ENCODE measurements at regions of chr5 and their contacts with region 1.

Region 1: DNA sequence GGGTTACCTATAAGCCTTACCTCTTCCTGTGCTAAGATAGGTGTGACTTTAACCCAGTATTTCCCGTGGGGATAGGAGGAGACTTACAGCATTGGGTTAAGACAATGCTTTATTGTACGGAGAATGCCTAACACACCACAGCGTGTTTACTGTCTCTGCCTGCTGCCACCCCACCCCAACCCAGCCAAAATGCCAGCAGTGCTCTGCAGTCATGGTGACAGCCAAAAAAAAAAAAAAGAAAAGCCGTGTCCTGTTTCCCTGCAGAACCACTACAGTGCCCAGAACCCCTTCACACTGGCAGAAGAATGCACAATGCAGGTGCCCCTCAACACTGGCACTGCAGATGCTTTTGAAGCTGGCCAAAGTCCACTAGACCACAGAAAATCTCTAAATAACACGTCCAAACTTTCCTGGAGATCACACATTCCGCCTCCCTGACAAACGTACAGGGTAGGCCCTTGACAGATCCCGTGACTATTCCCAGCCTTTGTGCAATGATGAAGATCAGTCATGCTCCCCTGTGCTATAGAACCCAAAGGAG is 102.2 kb downstream of the SERINC5 start:
- DNase-seq: peak in 11 of 14 experiments; percentile 19 to 67 (median 48)
- ATAC-seq: peak; percentile 69
- H3K4me3 ChIP-seq: no peak overlapping the region
- H3K4me3 Mint-ChIP-seq: peak overlapping the region; percentile 73
- H3K27ac ChIP-seq: peak overlapping the region; percentile 48 to 56
- H3K27ac Mint-ChIP-seq: peak overlapping the region; percentile 98
- H3K4me1 ChIP-seq: peaks cover 51% of the 10 kb centered on the region
- H3K4me1 Mint-ChIP-seq: peaks cover 86% of the 10 kb centered on the region
- H3K27me3 ChIP-seq: no peaks in the 10 kb centered on the region
- H3K27me3 Mint-ChIP-seq: no peaks in the 10 kb centered on the region
- CTCF ChIP-seq: no peak

Region 2: DNA sequence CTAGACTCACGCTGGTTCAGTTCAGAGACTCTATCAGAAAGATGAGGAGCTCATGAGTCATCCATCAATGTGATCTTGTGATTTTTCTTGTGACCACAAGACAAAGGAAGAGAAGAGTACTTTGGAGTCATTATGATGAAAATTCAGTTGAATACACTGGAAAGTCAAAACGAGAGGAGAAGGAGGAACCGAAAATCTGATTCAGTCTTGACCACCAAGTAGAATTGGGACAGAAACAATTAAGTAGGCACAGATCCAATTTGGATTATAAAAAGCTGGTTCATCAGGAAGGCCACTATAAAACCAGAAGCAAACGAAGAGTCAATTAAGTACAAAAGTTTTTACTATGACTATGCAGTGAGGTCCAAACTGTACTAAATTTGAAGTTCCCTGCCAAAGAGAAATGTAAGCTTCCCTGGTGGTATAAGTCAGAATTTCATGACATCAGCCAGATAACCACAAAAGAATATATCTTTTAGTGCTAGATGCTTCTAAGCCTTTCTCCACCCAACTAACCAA is 27.6 kb before region 1 on chr5:
- CTCF ChIA-PET with region 1: no interaction called
- POLR2A ChIA-PET with region 1: interaction called, 10 read pairs
- intact Hi-C with region 1: no loop called
- DNase-seq: peak in 4 of 14 experiments; percentile 50 to 75 (median 62)
- ATAC-seq: peak; percentile 83
- H3K4me3 ChIP-seq: no peak overlapping the region
- H3K4me3 Mint-ChIP-seq: peak overlapping the region; percentile 1
- H3K27ac ChIP-seq: peak overlapping the region in 1 of 2 donors; percentile 35
- H3K27ac Mint-ChIP-seq: peak overlapping the region; percentile 60
- H3K4me1 ChIP-seq: peaks cover 38% of the 10 kb centered on the region
- H3K4me1 Mint-ChIP-seq: peaks cover 57% of the 10 kb centered on the region
- H3K27me3 ChIP-seq: no peaks in the 10 kb centered on the region
- H3K27me3 Mint-ChIP-seq: no peaks in the 10 kb centered on the region
- CTCF ChIP-seq: no peak

Region 3: GRCh38 chr5:80204808-80205614 is 51.4 kb after region 1 on chr5:
- CTCF ChIA-PET with region 1: no interaction called
- POLR2A ChIA-PET with region 1: interaction called, 6 read pairs
- intact Hi-C with region 1: loop called in 1 of 2 experiments (anchors 5 kb)
- DNase-seq: peak in 2 of 14 experiments; percentile 51 to 63
- ATAC-seq: peak; percentile 87
- H3K4me3 ChIP-seq: no peak overlapping the region
- H3K4me3 Mint-ChIP-seq: peak overlapping the region; percentile 65
- H3K27ac ChIP-seq: peak overlapping the region; percentile 47 to 61
- H3K27ac Mint-ChIP-seq: peak overlapping the region; percentile 80
- H3K4me1 ChIP-seq: peaks cover 64% of the 10 kb centered on the region
- H3K4me1 Mint-ChIP-seq: peaks cover 92% of the 10 kb centered on the region
- H3K27me3 ChIP-seq: no peaks in the 10 kb centered on the region
- H3K27me3 Mint-ChIP-seq: no peaks in the 10 kb centered on the region
- CTCF ChIP-seq: no peak

Measured in CD4-positive, alpha-beta T cell (primary cell).